Right ventricle myocardium inferior (tissue), 1 donor: ENCODE measurements at regions of chr1 and their contacts with region 1.

Region 1: DNA sequence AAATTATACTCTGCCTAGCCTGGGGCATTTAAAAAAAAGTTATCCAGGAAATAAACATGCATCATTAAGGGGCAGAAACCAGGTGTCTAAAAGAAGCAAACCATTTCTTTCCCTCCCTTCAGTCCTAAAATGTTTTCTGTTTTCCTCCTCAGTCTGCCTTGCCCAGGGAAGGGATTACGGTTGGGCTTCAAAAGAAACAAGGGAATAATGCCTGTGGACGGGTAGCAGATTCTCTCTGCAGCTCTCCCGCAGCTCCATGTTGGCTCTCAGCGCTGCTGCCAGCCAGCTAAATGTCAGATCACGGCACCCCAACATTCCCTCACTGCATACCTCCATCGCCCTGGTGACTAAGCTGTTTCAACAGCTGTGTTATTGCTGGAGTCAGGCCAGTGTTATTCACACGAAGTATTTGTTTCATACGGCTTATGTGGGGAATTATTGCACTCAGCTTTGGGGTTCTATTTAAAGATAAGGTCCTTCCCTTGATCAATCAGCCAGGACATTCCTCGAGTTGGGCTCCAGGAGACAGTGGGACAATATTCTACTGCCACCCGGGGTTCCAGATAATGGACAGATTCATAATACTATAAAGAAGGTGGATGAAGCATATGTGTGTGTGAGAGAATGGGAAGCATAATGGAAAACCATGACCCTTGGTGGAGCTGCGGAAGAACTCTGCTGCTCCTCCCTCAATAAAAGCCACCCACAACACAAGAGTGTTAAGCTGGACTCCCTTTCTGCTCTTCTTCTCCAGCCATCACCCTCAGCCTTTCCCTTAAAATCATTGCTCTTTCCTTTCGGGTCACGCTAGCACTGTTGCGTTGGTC is 58.2 kb downstream of the WLS start:
- DNase-seq: no peak
- ATAC-seq: peak; percentile 63

Region 2: GRCh38 chr1:68132426-68133130 is 41.5 kb before region 1 on chr1:
- intact Hi-C with region 1: loop called (anchors 5 kb)
- DNase-seq: no peak
- ATAC-seq: no peak